ENCODE measurements at regions of chr6 and their contacts with region 1.

Region 1: DNA sequence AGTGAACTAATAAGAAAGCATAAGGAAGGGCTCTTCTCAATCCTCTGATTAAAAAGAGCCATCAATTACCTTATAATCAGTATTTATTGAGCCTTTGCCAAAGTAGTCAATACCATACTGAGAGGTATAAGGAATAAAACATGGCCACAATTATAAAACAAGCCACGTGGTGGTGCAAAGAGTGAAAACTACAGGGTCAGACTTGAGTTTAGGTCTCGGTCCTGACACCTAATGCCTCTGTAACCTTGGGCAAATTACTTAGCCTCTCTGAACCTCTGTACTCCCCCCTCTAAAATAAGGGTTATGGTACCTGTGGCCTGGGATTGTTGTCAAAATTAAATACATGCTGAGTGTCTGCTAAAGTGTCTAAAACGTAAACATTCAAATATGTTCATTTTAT is 11.8 kb downstream of the TRIM10 start:
- DNase-seq: no peak
- H3K4me3 ChIP-seq: no peak overlapping the region
- H3K27ac ChIP-seq: no peak overlapping the region
- H3K4me1 ChIP-seq: peaks cover 3% of the 10 kb centered on the region
- H3K27me3 ChIP-seq: no peaks in the 10 kb centered on the region
- CTCF ChIP-seq: no peak

Region 2: GRCh38 chr6:28474441-28475219 is 1674.6 kb before region 1 on chr6:
- CTCF ChIA-PET with region 1: no interaction called
- dilution Hi-C with region 1: no loop called
- in situ Hi-C with region 1: no loop called
- intact Hi-C with region 1: no loop called
- DNase-seq: peak; percentile 82
- H3K4me3 ChIP-seq: peak overlapping the region; percentile 41 to 84 (median 67)
- H3K27ac ChIP-seq: no peak overlapping the region
- H3K4me1 ChIP-seq: no peaks in the 10 kb centered on the region
- H3K27me3 ChIP-seq: no peaks in the 10 kb centered on the region
- CTCF ChIP-seq: no peak

Region 3: DNA sequence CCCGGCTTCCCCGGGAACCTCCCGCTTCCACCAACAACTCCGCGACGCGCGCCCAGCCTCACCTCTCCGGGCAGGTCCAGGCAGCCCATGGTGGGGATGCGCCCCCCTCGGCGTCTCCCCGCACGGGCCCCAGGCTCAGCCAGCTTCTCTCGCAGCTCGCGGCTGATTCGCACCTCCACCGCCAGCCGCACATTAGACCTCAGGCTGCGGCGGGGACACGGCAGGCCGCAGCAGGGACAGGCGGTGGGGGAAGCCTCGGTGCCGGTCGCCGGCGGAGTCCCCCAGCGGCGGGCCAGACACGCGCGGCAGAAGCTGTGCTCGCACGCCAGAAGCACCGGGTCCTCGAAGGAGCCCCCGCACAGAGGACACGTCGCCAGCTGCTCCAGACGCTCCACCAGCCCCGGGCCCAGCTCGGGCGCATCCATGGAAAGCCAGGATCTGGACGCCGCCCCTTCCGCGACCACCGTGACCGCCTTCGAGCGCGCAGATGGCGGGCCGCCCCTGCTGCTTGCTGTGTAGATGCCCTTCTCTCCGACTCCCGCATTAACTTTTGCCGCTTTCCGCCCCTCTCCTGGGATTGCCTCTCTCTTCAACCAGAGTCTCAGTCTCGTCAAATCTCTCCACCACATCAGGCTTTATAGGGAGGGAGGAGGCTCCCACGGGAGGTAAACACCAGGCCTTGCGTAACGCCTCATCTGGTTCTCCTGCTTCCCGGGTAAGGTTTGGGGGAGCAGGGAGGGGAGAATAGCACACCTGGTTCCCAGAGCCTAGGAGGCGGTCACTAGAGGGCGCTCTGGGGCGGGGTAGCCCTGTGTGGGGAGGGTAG is 73.9 kb before region 1 on chr6 and contains the start of gene RNF39:
- CTCF ChIA-PET with region 1: no interaction called
- dilution Hi-C with region 1: no loop called
- in situ Hi-C with region 1: no loop called
- intact Hi-C with region 1: no loop called
- DNase-seq: peak; percentile 79
- H3K4me3 ChIP-seq: peak within 1 kb of the TSS; percentile 74 to 77 (median 77)
- H3K27ac ChIP-seq: peak within 1 kb of the TSS; percentile 62
- H3K4me1 ChIP-seq: peaks cover 28% of the 10 kb centered on the region
- H3K27me3 ChIP-seq: peaks cover 9% of the 10 kb centered on the region
- CTCF ChIP-seq: peak in 1 of 2 donors; percentile 63
- total RNA-seq, gene RNF39: 2.5 to 5.4 TPM

Region 4: DNA sequence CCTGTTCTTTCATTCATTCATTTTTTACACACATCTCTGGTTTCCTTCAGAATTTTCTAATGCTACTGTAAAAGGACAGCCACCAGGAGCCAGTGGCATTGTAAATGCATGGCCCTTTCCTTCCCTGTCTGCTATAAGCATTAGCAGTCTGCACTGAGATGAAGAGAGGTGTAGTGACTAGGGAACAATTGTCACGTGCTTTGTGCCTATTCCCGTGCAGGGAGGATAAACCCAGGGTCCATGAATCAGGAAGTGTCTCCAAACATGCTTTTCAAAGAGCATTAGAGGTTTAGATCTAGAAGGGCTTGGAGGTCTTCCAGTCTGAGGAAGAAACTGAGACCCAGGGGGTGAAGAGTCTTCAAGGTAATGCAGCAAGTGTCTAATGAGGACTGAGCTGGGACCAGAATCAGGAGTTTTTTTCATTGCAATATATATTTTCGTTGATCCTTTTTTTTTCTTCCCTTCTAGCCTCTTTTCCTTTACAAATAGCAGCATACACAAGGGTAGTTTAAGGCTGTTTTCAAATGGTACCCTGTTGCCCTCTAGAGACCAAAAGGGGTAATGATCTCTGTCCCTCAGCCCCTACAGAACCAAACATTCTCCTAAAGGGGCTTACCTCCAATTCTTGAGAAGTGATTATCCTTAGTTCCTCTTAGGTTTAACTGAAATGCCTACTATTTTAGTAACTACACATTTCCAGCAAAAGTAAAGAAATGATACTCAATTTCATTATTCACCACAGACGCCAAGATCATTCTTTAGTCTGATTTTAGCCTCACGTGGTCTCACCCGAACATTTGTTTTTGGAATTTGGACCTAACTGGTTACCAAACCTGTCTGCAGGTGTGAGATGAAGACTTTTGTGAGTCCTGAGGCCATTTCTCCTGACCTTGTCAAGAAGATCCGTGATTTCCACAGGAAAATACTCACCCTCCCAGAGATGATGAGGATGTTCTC is 20.7 kb after region 1 on chr6:
- CTCF ChIA-PET with region 1: no interaction called
- dilution Hi-C with region 1: no loop called
- in situ Hi-C with region 1: no loop called
- intact Hi-C with region 1: loop called (anchors 1 kb)
- DNase-seq: peak; percentile 41
- H3K4me3 ChIP-seq: no peak overlapping the region
- H3K27ac ChIP-seq: no peak overlapping the region
- H3K4me1 ChIP-seq: no peaks in the 10 kb centered on the region
- H3K27me3 ChIP-seq: peaks cover 14% of the 10 kb centered on the region
- CTCF ChIP-seq: peak; percentile 85 to 90

Region 5: DNA sequence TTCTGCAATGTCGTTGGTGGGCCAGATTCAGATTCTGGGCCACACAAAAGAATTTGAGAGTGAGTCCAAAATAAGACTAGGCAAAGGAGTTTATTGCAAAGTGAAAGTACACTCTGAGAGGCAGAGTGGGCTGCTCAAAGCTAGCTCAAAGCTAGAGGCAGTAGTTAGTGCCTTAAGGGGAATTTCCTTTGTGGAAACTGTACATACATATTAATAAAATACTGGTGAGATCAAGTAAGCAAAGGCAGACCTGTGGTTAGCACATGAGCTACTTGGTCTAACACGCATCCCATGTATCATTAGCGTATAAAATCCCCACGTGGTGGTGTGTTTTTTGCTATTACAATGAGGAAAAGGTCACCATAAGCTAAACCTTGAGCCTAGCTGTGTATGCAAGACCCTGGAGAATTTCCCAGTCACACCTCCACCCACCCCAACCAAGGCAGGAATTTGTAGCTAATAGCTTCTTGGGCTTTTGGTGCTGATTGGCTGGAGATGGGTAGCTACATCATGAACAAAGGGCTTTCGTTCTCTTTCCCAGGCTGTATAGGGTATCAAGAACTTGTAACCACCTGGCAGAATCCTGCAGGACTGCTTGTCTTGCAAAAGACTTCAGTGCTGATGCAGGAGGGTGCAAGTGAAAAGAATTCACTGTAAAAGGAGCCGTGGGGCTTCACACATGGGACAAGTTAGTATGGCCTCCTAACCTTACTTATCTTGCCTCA is 78.7 kb after region 1 on chr6:
- CTCF ChIA-PET with region 1: no interaction called
- dilution Hi-C with region 1: no loop called
- in situ Hi-C with region 1: no loop called
- intact Hi-C with region 1: no loop called
- DNase-seq: no peak
- H3K4me3 ChIP-seq: no peak overlapping the region
- H3K27ac ChIP-seq: no peak overlapping the region
- H3K4me1 ChIP-seq: no peaks in the 10 kb centered on the region
- H3K27me3 ChIP-seq: no peaks in the 10 kb centered on the region
- CTCF ChIP-seq: no peak

Measured in mammary epithelial cell (primary cell).